ENCODE measurements at regions of chr6 and their contacts with region 1.

Region 1: GRCh38 chr6:44917430-44917829 is 410.7 kb upstream of the RUNX2 start:
- DNase-seq: peak; percentile 9
- H3K4me3 ChIP-seq: no peak overlapping the region
- H3K27ac ChIP-seq: no peak overlapping the region
- H3K4me1 ChIP-seq: no peaks in the 10 kb centered on the region
- H3K27me3 ChIP-seq: no peaks in the 10 kb centered on the region
- CTCF ChIP-seq: no peak

Region 2: GRCh38 chr6:44800171-44800783 is 117.2 kb before region 1 on chr6:
- CTCF ChIA-PET with region 1: no interaction called
- dilution Hi-C with region 1: loop called (anchors 10 kb)
- in situ Hi-C with region 1: no loop called
- intact Hi-C with region 1: no loop called
- DNase-seq: peak; percentile 48
- H3K4me3 ChIP-seq: no peak overlapping the region
- H3K27ac ChIP-seq: no peak overlapping the region
- H3K4me1 ChIP-seq: peaks cover 3% of the 10 kb centered on the region
- H3K27me3 ChIP-seq: no peaks in the 10 kb centered on the region
- CTCF ChIP-seq: no peak

Region 3: DNA sequence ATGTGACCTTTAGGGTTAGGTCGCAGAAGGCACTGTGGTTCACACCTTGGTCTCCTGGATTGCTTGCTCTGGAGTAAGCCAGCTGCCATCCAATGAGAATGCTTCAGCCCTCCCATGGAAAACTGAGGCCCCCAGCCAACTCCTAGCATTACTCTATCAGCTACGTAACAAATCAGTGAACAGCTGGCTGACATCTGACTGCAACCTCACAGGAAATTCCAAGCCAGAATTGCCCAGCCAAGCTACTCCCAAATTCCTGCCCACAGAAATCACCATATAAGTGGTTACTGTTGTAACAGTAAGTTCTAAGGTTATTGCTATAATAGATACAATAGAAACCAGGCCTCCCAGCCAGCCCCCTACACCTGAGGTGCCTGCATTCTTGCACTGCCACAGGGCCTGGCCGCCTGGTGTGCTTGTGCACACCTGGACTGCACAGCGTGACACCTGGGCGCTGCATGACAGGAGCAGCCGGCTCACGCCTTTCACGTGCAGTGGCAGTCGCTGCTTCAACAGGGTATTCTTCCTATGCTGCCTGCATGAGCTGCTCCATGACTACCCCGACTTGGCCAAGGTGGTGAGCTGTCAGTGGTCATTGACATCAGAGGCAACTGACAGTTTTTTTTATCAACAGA is 19.0 kb before region 1 on chr6:
- CTCF ChIA-PET with region 1: no interaction called
- dilution Hi-C with region 1: no loop called
- in situ Hi-C with region 1: no loop called
- intact Hi-C with region 1: no loop called
- DNase-seq: peak; percentile 54
- H3K4me3 ChIP-seq: no peak overlapping the region
- H3K27ac ChIP-seq: no peak overlapping the region
- H3K4me1 ChIP-seq: no peaks in the 10 kb centered on the region
- H3K27me3 ChIP-seq: no peaks in the 10 kb centered on the region
- CTCF ChIP-seq: no peak